ENCODE measurements at regions of chr1 and their contacts with region 1.

Region 1: DNA sequence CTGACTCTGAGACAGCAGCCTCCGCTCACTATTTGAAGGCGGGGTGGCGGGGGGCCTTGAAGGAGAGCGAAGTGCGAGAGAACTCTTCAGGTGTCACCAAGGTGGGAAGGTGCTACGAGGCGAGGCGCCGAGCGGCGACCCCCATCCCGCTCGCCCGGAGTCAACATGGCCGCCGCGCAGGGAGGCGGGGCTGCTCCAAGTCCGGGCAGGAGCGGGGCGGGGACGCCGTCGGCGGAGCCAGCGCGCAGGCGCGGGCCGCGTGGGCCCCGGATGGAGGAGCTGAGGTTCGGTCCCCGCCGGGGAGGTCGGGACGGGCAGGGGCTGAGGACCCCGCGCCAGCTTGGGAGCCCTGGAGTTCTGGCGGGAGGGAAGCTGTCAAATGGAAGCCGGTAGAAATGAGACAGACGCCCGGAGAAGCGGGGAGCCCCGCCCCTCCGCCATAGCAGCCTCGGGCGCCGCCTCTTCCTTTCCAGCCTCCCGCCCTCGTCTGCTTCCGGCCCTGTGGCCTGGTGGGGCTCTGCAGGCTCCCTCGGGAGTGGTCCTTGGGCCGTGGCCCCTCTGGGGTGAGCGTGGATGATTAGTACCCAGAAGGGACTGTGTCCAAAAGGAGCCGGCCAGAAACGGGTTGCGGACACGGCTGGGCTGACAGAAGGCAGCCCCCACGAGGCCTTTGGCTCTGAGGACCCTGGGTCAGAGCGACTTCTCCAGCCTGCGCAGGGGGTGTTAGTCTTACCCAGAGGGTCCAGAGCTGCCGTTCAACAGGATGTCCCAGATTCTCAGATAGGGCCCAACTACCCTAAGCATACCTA is at the start of gene PIGV:
- H3K4me3 Mint-ChIP-seq: peak within 1 kb of the TSS; percentile 98
- H3K27ac Mint-ChIP-seq: peak within 1 kb of the TSS; percentile 99
- H3K4me1 Mint-ChIP-seq: peaks cover 83% of the 10 kb centered on the region
- H3K27me3 Mint-ChIP-seq: no peaks in the 10 kb centered on the region

Region 2: DNA sequence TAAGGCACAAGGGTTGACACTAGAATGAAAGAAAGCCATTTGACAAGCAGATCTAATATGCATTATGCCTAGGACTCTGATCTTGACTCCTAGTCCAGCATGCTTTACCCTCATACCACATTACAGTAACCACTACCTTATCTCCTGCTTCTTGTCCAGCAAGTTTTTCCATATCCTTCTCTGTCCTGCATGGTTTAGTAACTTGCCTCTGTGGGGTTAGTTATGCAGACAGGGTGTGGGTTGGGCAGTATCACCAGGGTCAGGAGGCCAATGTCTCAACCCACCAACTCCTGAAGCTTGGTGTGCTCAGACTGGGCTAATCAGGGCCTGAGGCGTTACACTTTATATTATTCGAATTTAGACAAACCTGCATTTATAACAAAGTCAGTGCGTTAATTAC is 337.0 kb before region 1 on chr1:
- intact Hi-C with region 1: no loop called
- H3K4me3 Mint-ChIP-seq: no peak overlapping the region
- H3K27ac Mint-ChIP-seq: peak overlapping the region; percentile 30
- H3K4me1 Mint-ChIP-seq: peaks cover 6% of the 10 kb centered on the region
- H3K27me3 Mint-ChIP-seq: no peaks in the 10 kb centered on the region

Region 3: GRCh38 chr1:26500488-26501175 is 287.3 kb before region 1 on chr1:
- intact Hi-C with region 1: loop called (anchors 2 kb)
- H3K4me3 Mint-ChIP-seq: peak overlapping the region; percentile 89
- H3K27ac Mint-ChIP-seq: peak overlapping the region; percentile 94
- H3K4me1 Mint-ChIP-seq: peaks cover 29% of the 10 kb centered on the region
- H3K27me3 Mint-ChIP-seq: no peaks in the 10 kb centered on the region

Region 4: GRCh38 chr1:26602378-26602959 is 185.4 kb before region 1 on chr1:
- intact Hi-C with region 1: loop called (anchors 1 kb)
- H3K4me3 Mint-ChIP-seq: no peak overlapping the region
- H3K27ac Mint-ChIP-seq: no peak overlapping the region
- H3K4me1 Mint-ChIP-seq: peaks cover 41% of the 10 kb centered on the region
- H3K27me3 Mint-ChIP-seq: no peaks in the 10 kb centered on the region

Region 5: DNA sequence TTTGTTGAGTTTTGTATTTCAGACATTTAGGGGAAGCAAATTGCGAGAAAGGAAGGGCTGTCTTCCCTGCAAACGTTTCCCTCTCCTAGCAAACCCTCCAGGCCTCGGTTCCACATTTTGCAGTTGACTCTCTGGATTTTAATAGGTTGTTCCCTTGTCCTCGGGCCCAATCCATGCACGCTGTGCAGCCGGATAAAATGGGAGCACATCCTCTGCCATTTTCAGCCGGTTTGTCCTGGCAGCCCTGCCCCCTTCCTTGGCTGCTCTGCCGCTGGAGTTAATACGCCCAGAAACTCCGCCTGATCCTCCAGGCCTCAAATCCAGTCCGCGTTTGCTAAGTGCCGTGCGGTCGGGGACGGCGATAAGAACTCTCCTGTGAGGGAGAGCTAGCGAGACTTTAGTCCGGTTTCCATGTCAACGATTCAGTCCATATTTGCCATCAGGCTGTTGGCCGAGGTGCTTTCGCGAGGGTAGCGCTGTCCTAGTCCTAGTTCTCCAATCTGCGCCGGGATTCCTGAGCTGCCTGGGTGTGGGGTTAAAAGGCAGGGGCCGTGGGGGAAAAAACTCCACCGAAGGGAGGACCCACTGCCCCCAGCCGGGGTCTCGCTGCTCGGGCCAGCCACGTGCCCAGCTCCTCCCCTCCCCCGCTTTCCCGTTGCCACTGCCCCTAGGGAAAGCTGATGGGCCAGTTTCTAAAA is 95.0 kb before region 1 on chr1:
- intact Hi-C with region 1: loop called (anchors 1 kb)
- H3K4me3 Mint-ChIP-seq: peak overlapping the region; percentile 79
- H3K27ac Mint-ChIP-seq: peak overlapping the region; percentile 95
- H3K4me1 Mint-ChIP-seq: peaks cover 53% of the 10 kb centered on the region
- H3K27me3 Mint-ChIP-seq: no peaks in the 10 kb centered on the region

Region 6: DNA sequence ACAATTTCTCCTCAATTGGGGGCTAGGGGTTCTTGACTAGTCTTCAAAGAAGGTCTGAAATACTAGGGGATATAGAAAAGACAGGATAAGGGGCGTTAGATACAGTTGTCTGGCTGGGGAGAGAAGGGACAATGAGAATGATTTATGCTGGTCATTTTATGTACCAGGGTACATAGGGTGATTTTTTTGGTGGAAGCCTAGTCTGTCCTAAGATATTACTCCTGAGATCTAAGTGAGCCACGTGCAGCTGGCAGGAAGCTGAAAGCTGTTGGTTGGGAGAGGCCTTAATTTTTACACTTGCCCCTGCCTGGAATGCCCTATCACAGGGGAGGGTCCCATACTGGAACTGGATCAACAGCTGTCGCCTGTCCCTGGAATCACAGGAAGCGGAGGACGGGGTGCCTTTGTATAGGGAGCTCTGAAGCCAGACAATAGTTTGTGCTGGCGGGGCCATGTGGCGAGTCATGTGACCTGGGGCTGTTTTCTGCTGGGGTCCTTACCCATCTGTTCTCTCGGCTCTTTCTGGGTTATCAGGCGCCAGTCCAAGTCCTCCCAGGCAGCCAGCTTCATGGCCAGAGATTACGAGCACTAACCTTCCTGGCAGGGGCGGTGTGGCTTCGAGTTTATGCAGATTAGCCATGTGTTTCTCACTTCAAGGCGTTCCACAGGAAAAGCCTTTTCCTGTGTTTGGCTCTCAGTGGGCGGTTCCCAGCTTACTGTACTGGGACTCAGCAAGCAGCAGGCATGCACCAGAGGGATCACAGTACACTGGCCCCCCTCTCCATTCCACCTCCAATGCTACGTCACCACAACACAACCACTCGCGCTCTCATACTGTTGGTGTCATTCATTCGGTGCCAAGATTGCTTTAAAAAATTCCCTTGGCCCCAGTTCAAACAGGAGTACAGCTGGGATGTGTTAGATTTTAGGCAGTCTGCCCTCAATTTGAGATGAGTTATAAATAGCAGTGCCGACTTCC is 64.6 kb before region 1 on chr1:
- intact Hi-C with region 1: loop called (anchors 10 kb)
- H3K4me3 Mint-ChIP-seq: peak overlapping the region; percentile 47
- H3K27ac Mint-ChIP-seq: peak overlapping the region; percentile 70
- H3K4me1 Mint-ChIP-seq: peaks cover 78% of the 10 kb centered on the region
- H3K27me3 Mint-ChIP-seq: no peaks in the 10 kb centered on the region

Region 7: GRCh38 chr1:26826261-26827105 is 38.6 kb after region 1 on chr1 and contains the start of gene ZDHHC18:
- intact Hi-C with region 1: no loop called
- H3K4me3 Mint-ChIP-seq: peak within 1 kb of the TSS; percentile 88
- H3K27ac Mint-ChIP-seq: peak within 1 kb of the TSS; percentile 89
- H3K4me1 Mint-ChIP-seq: peaks cover 64% of the 10 kb centered on the region
- H3K27me3 Mint-ChIP-seq: no peaks in the 10 kb centered on the region